ENCODE measurements at regions of chr5 and their contacts with region 1.

Region 1: DNA sequence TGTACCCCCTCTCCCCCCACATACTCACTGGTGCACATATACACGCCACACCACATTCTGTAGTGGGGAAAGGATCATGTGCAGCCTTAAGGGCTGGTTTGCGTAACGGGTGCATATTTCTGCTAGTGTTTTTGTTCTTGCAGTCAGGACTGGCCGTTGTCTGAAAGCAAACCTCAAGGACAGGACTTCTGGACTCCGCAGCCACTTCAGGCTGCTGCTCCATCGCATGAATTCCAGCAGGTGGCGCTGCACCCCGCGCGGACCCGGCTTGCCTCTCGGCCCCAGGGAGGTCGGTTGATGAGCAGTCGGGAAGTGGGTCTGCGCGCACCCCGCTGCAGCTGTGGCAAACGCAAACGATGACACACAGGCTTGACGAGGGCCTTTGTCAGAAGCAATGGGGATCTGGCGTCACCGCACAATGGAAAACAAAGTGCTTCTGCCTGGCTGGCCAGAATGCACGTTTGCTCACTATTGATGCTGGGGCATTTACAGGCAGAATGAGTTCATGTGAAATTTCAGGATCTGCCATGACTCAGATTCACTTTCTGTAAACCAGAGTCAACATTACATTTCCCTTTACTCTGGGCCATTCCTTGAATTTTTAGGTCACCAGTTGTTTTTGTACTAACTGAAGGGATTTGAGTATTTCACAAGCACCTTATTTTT is 36.3 kb upstream of the GLRX start:
- DNase-seq: peak; percentile 81 to 91 (median 87)
- ATAC-seq: peak; percentile 94
- H3K4me3 ChIP-seq: no peak overlapping the region
- H3K4me3 Mint-ChIP-seq: peak overlapping the region; percentile 25 to 78 (median 62)
- H3K27ac ChIP-seq: no peak overlapping the region
- H3K27ac Mint-ChIP-seq: peak overlapping the region; percentile 10 to 85 (median 56)
- H3K4me1 ChIP-seq: no peaks in the 10 kb centered on the region
- H3K4me1 Mint-ChIP-seq: peaks cover 11 to 43% (median 16%) of the 10 kb centered on the region in 7 donors
- H3K27me3 ChIP-seq: no peaks in the 10 kb centered on the region
- H3K27me3 Mint-ChIP-seq: peaks cover 0 to 18% (median 14%) of the 10 kb centered on the region in 5 donors

Region 2: DNA sequence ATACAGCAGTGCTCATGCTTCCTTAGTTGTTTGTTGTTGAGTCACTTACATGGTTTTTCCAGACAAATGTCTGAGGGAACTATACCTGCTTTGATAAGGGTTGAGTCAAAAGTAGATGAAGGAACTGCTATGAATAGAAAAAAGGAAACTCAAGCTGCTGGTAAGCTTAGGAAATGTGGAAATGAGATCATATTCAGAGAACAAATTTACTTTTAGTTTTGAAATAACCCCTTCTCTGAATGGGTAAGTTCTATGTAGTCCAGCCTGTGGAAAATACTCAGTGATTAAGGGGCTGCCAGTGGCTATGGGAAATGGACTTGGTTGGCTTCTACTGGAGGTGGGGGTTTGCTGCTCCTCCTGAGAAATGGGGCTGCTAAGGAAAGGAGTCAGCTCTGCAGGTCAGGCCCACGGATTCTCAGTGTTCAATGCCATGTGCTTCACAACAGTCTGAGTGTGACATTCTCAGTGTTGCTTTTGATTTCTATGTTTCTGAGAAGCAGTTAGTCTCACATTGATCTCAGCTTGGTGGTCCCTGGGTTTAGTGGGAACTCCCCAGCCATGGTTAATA is 11.4 kb after region 1 on chr5:
- CTCF ChIA-PET with region 1: interaction called, 15 read pairs
- POLR2A ChIA-PET with region 1: no interaction called
- intact Hi-C with region 1: loop called (anchors 1 kb)
- DNase-seq: peak in 1 of 9 donors; percentile 54
- ATAC-seq: peak; percentile 41
- H3K4me3 ChIP-seq: no peak overlapping the region
- H3K4me3 Mint-ChIP-seq: peak overlapping the region; percentile 14 to 83 (median 60)
- H3K27ac ChIP-seq: no peak overlapping the region
- H3K27ac Mint-ChIP-seq: peak overlapping the region; percentile 12 to 94 (median 59)
- H3K4me1 ChIP-seq: peaks cover 19 to 21% of the 10 kb centered on the region in 2 donors
- H3K4me1 Mint-ChIP-seq: peaks cover 26 to 41% (median 40%) of the 10 kb centered on the region in 7 donors
- H3K27me3 ChIP-seq: no peaks in the 10 kb centered on the region
- H3K27me3 Mint-ChIP-seq: no peaks in the 10 kb centered on the region

Region 3: DNA sequence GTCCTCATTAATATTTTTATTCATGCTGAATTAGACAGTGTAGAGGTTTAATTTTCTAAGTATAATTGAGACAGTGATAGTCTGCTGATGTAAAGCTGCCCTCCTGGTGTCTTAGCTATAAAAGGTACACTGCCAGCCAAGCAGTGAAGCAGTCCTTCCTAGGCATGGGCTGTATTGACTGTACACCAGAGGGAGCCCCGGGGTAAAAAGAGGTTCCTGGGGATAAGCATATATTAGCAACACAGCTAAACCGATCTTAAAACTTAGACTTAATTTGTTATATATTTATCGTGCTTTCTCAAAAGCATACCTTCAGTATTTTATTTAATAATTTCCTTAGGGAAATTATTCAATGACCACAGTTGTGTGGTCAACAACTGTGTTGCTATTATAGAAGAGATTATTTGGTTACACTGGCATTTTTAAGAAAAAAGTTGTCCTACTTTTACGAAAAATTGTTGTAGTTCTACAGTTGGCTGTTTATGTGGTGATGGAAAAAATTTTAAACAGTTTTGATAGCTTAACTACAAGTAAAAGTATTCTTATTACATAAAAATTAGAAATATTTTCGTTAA is 34.1 kb after region 1 on chr5:
- CTCF ChIA-PET with region 1: no interaction called
- POLR2A ChIA-PET with region 1: no interaction called
- intact Hi-C with region 1: loop called (anchors 2 kb)
- DNase-seq: peak in 1 of 9 donors; percentile 2
- ATAC-seq: peak; percentile 65
- H3K4me3 ChIP-seq: no peak overlapping the region
- H3K4me3 Mint-ChIP-seq: no peak overlapping the region
- H3K27ac ChIP-seq: no peak overlapping the region
- H3K27ac Mint-ChIP-seq: no peak overlapping the region
- H3K4me1 ChIP-seq: no peaks in the 10 kb centered on the region
- H3K4me1 Mint-ChIP-seq: peaks cover 0 to 14% (median 0%) of the 10 kb centered on the region in 7 donors
- H3K27me3 ChIP-seq: no peaks in the 10 kb centered on the region
- H3K27me3 Mint-ChIP-seq: no peaks in the 10 kb centered on the region

Region 4: GRCh38 chr5:96336351-96336985 is 477.7 kb after region 1 on chr5:
- CTCF ChIA-PET with region 1: interaction called, 119 read pairs
- POLR2A ChIA-PET with region 1: no interaction called
- intact Hi-C with region 1: loop called (anchors 1 kb)
- DNase-seq: peak in 8 of 9 donors; percentile 41 to 72 (median 65)
- ATAC-seq: peak; percentile 92
- H3K4me3 ChIP-seq: no peak overlapping the region
- H3K4me3 Mint-ChIP-seq: no peak overlapping the region
- H3K27ac ChIP-seq: no peak overlapping the region
- H3K27ac Mint-ChIP-seq: no peak overlapping the region
- H3K4me1 ChIP-seq: no peaks in the 10 kb centered on the region
- H3K4me1 Mint-ChIP-seq: peaks cover 0 to 9% (median 0%) of the 10 kb centered on the region in 7 donors
- H3K27me3 ChIP-seq: no peaks in the 10 kb centered on the region
- H3K27me3 Mint-ChIP-seq: peaks cover 7 to 26% (median 14%) of the 10 kb centered on the region in 5 donors

Region 5: GRCh38 chr5:96344678-96345577 is 486.1 kb after region 1 on chr5:
- CTCF ChIA-PET with region 1: interaction called, 119 read pairs
- POLR2A ChIA-PET with region 1: no interaction called
- intact Hi-C with region 1: no loop called
- DNase-seq: peak in 7 of 9 donors; percentile 33 to 70 (median 59)
- ATAC-seq: peak; percentile 91
- H3K4me3 ChIP-seq: no peak overlapping the region
- H3K4me3 Mint-ChIP-seq: peak overlapping the region; percentile 1 to 72 (median 48)
- H3K27ac ChIP-seq: no peak overlapping the region
- H3K27ac Mint-ChIP-seq: peak overlapping the region in 6 of 9 donors; percentile 3 to 53 (median 10)
- H3K4me1 ChIP-seq: peaks cover 6 to 7% of the 10 kb centered on the region in 2 donors
- H3K4me1 Mint-ChIP-seq: peaks cover 5 to 21% (median 18%) of the 10 kb centered on the region in 7 donors
- H3K27me3 ChIP-seq: no peaks in the 10 kb centered on the region
- H3K27me3 Mint-ChIP-seq: peaks cover 0 to 38% (median 8%) of the 10 kb centered on the region in 5 donors

Measured in naive thymus-derived CD4-positive, alpha-beta T cell (primary cell).